ENCODE measurements at regions of chr7 and their contacts with region 1.

Region 1: DNA sequence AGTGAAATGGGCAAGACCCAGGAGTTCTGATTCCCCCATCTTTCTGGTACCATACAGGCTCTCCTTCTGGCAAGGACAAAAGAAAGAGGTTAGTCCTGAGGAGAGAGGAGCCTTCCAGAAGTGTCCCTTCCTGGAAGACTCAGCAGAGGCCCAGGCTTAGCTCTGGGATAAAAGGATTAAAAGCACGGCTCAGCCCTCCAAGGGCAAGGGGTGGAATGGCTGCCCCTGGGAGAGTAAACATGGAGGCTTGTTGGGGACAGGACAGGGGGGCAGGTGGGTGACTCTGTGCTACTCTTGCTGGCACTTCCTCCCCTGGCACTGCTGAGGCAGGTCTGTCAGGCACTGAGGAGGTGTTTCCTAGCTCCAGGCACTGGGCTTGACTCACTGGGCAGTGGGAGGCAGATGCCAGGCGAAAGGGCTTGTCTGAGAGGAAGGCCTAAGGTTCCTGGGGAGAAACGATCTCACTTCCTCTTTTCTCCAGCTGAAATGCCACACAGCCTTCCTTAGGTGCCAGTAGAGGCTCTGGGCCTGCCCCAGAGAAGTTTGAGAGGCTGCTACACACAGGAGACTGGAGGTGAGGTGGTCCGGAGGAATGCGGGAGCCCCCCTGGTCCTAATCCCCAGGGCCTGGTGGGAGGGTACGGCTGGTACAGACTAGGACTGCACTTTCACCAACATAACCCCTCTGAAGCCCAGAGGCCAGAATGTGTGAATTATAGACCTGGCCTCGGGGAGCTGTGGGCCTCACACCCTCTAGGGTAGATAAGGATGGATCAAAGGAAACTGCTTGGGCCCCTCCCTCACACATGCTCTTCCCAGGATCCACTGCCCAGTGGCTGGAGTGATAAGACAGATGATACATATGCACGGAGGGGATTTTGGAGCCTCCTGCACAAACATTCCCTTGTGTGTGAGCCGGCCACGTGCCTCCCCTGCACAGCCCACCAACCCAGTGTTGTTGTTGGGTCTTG is 63.2 kb upstream of the PODXL start:
- DNase-seq: peak; percentile 90 to 96
- H3K4me3 ChIP-seq: no peak overlapping the region
- H3K4me3 Mint-ChIP-seq: peak overlapping the region; percentile 22
- H3K27ac Mint-ChIP-seq: peak overlapping the region; percentile 13
- H3K4me1 ChIP-seq: peaks cover 76% of the 10 kb centered on the region
- H3K4me1 Mint-ChIP-seq: peaks cover 50% of the 10 kb centered on the region
- H3K27me3 ChIP-seq: no peaks in the 10 kb centered on the region
- H3K27me3 Mint-ChIP-seq: no peaks in the 10 kb centered on the region
- CTCF ChIP-seq: no peak

Region 2: GRCh38 chr7:131521651-131522163 is 97.9 kb before region 1 on chr7:
- CTCF ChIA-PET with region 1: no interaction called
- POLR2A ChIA-PET with region 1: no interaction called
- intact Hi-C with region 1: no loop called
- DNase-seq: peak; percentile 36 to 75
- H3K4me3 ChIP-seq: no peak overlapping the region
- H3K4me3 Mint-ChIP-seq: no peak overlapping the region
- H3K27ac Mint-ChIP-seq: peak overlapping the region; percentile 80
- H3K4me1 ChIP-seq: peaks cover 20% of the 10 kb centered on the region
- H3K4me1 Mint-ChIP-seq: peaks cover 33% of the 10 kb centered on the region
- H3K27me3 ChIP-seq: no peaks in the 10 kb centered on the region
- H3K27me3 Mint-ChIP-seq: no peaks in the 10 kb centered on the region
- CTCF ChIP-seq: no peak

Region 3: DNA sequence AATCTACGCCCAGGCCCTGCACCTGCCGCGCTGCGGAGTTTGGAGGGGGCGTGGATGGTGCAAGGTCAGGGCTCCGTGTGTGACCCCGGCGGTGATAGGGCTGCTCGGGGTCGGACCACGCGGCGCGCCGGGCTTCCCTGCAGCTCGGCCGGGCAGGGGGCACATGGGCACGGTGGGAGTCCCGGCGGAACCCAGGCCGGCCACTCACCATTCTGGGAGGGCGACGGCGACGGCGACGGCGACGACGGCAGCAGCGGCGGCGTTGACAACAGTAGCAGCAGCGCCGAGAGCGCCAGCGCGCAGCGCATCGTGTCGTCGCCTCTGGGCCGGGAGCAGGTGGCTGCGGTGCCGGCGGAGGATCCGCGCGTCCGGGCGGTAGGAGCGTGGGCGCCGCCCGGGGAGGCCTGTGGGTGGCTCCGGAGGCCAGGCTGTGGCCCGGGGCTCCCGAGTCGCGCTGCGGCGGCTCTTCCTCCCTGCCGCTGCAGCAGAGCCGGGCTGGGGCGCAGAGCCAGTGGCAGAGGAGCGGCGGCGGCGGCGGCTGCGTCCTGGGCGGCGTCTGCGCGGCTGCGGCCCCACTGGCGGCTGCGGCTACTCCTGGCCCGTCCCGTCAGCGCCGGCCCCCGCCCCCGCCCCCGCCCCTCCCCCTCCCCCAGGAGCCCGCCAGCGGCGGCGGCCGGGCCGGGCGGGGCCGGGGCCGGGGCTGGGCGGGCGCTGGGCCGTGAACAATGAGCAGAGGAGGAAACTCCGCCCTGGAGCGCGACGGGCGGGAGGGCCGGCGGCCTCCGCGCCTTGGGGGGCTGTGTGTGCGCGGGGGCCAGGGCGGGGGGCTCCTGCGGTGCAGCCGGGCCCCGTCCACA is 63.3 kb before region 1 on chr7 and contains the start of gene PODXL:
- CTCF ChIA-PET with region 1: interaction called, 10 read pairs
- POLR2A ChIA-PET with region 1: no interaction called
- intact Hi-C with region 1: loop called (anchors 2 kb)
- DNase-seq: peak; percentile 73 to 83
- H3K4me3 ChIP-seq: peak within 1 kb of the TSS; percentile 91
- H3K4me3 Mint-ChIP-seq: peak within 1 kb of the TSS; percentile 94
- H3K27ac Mint-ChIP-seq: peak within 1 kb of the TSS; percentile 67
- H3K4me1 ChIP-seq: peaks cover 31% of the 10 kb centered on the region
- H3K4me1 Mint-ChIP-seq: peaks cover 34% of the 10 kb centered on the region
- H3K27me3 ChIP-seq: no peaks in the 10 kb centered on the region
- H3K27me3 Mint-ChIP-seq: no peaks in the 10 kb centered on the region
- CTCF ChIP-seq: no peak
- total RNA-seq, gene PODXL: 243 and 278 TPM in 2 replicates

Region 4: GRCh38 chr7:131604841-131605279 is 14.8 kb before region 1 on chr7:
- CTCF ChIA-PET with region 1: interaction called, 4 read pairs
- POLR2A ChIA-PET with region 1: interaction called, 5 read pairs
- intact Hi-C with region 1: loop called (anchors 1 kb)
- DNase-seq: no peak
- H3K4me3 ChIP-seq: no peak overlapping the region
- H3K4me3 Mint-ChIP-seq: no peak overlapping the region
- H3K27ac Mint-ChIP-seq: peak overlapping the region; percentile 81
- H3K4me1 ChIP-seq: peaks cover 97% of the 10 kb centered on the region
- H3K4me1 Mint-ChIP-seq: peaks cover 68% of the 10 kb centered on the region
- H3K27me3 ChIP-seq: no peaks in the 10 kb centered on the region
- H3K27me3 Mint-ChIP-seq: no peaks in the 10 kb centered on the region
- CTCF ChIP-seq: no peak

Region 5: GRCh38 chr7:131638641-131639430 is 19.2 kb after region 1 on chr7:
- CTCF ChIA-PET with region 1: interaction called, 4 read pairs
- POLR2A ChIA-PET with region 1: interaction called, 6 read pairs
- intact Hi-C with region 1: loop called (anchors 2 kb)
- DNase-seq: peak; percentile 75 to 84
- H3K4me3 ChIP-seq: no peak overlapping the region
- H3K4me3 Mint-ChIP-seq: peak overlapping the region; percentile 17
- H3K27ac Mint-ChIP-seq: peak overlapping the region; percentile 73
- H3K4me1 ChIP-seq: peaks cover 72% of the 10 kb centered on the region
- H3K4me1 Mint-ChIP-seq: peaks cover 64% of the 10 kb centered on the region
- H3K27me3 ChIP-seq: no peaks in the 10 kb centered on the region
- H3K27me3 Mint-ChIP-seq: no peaks in the 10 kb centered on the region
- CTCF ChIP-seq: no peak

Region 6: GRCh38 chr7:131699323-131699722 is 79.7 kb after region 1 on chr7:
- CTCF ChIA-PET with region 1: no interaction called
- POLR2A ChIA-PET with region 1: no interaction called
- intact Hi-C with region 1: no loop called
- DNase-seq: no peak
- H3K4me3 ChIP-seq: no peak overlapping the region
- H3K4me3 Mint-ChIP-seq: no peak overlapping the region
- H3K27ac Mint-ChIP-seq: no peak overlapping the region
- H3K4me1 ChIP-seq: no peaks in the 10 kb centered on the region
- H3K4me1 Mint-ChIP-seq: no peaks in the 10 kb centered on the region
- H3K27me3 ChIP-seq: no peaks in the 10 kb centered on the region
- H3K27me3 Mint-ChIP-seq: peaks cover 2% of the 10 kb centered on the region
- CTCF ChIP-seq: no peak

Region 7: DNA sequence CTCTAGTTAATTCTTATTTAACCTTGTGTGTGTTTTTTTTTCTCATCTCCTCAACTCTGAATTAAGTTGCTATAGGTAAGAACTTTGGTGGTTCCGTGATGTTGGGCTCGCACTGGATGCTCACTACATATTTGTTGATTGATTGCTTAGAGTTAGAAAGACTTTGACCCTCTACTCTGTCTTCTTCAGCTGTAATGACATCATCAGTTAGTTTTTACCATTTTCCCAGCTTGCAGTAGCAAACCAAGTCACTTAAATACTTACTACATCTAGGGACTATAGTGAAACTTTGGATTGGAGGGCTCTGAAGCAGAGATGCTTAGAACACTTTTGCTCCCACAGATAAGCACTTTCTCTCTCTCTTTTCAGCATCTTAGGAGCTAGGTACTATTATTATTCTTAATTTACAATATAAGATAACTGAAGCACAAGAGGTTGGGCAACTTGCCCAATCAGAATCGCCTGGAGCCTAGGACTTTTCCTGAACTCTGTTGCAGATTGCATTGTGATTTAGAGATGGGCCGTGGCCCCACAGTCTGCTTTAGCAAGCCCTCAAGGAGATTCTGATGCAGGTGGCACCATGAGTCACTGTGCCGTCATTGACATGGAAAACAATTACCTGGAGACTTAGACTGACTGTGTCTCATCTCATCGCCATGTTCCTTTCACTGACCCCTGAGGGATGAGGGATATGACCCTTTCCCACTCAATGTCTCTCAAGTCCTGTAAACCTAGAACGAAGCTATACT is 408.7 kb after region 1 on chr7:
- CTCF ChIA-PET with region 1: no interaction called
- POLR2A ChIA-PET with region 1: no interaction called
- intact Hi-C with region 1: no loop called
- DNase-seq: no peak
- H3K4me3 ChIP-seq: no peak overlapping the region
- H3K4me3 Mint-ChIP-seq: no peak overlapping the region
- H3K27ac Mint-ChIP-seq: no peak overlapping the region
- H3K4me1 ChIP-seq: peaks cover 8% of the 10 kb centered on the region
- H3K4me1 Mint-ChIP-seq: peaks cover 9% of the 10 kb centered on the region
- H3K27me3 ChIP-seq: peaks cover 2% of the 10 kb centered on the region; the same call in 1 of the 2 replicates
- H3K27me3 Mint-ChIP-seq: no peaks in the 10 kb centered on the region
- CTCF ChIP-seq: no peak

Measured in Caco-2 (cell line).